ENCODE measurements at regions of chr7 and their contacts with region 1.

Region 1: GRCh38 chr7:128462460-128462859 is 6.8 kb downstream of the HILPDA start:
- DNase-seq: no peak
- ATAC-seq: no peak
- H3K4me3 ChIP-seq: no peak overlapping the region
- H3K27ac ChIP-seq: no peak overlapping the region
- H3K4me1 ChIP-seq: peaks cover 0 to 4% (median 0%) of the 10 kb centered on the region in 4 donors
- H3K27me3 ChIP-seq: no peaks in the 10 kb centered on the region
- CTCF ChIP-seq: no peak
- POLR2A ChIP-seq: no peak

Region 2: DNA sequence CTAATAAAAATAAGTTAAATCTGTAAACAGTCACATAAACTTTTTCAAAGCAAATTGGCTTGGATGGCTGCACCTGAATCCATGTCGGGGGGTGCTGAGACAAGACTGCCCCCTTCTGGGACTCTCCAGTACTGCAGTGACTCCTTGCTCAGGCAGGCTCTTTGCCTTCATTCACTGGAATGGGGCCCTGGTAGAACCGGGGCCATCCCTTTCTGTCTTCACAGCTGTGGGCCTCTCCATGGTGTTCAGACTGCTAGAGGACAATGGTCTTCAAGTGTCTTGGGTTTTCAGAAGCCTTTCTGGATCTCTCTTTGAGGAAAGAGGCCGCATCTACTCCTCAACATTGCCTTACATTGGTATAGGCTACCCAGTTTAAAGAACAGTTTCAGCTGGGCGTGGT is 36.6 kb before region 1 on chr7:
- intact Hi-C with region 1: loop called in 1 of 2 experiments (anchors 5 kb)
- DNase-seq: peak in 2 of 3 donors; percentile 53 to 70
- ATAC-seq: peak; percentile 69 to 75 (median 74)
- H3K4me3 ChIP-seq: no peak overlapping the region
- H3K27ac ChIP-seq: no peak overlapping the region
- H3K4me1 ChIP-seq: peaks cover 0 to 9% (median 2%) of the 10 kb centered on the region in 4 donors
- H3K27me3 ChIP-seq: no peaks in the 10 kb centered on the region
- CTCF ChIP-seq: peak; percentile 75 to 92 (median 90)
- POLR2A ChIP-seq: no peak